Mammary epithelial cell (primary cell): ENCODE measurements at regions of chr2 and their contacts with region 1.

Region 1: GRCh38 chr2:172404824-172405223 is 22.6 kb upstream of the ITGA6 start:
- DNase-seq: peak; percentile 82
- H3K4me3 ChIP-seq: no peak overlapping the region
- H3K27ac ChIP-seq: peak overlapping the region; percentile 52
- H3K4me1 ChIP-seq: peaks cover 60% of the 10 kb centered on the region
- H3K27me3 ChIP-seq: no peaks in the 10 kb centered on the region
- CTCF ChIP-seq: no peak

Region 2: DNA sequence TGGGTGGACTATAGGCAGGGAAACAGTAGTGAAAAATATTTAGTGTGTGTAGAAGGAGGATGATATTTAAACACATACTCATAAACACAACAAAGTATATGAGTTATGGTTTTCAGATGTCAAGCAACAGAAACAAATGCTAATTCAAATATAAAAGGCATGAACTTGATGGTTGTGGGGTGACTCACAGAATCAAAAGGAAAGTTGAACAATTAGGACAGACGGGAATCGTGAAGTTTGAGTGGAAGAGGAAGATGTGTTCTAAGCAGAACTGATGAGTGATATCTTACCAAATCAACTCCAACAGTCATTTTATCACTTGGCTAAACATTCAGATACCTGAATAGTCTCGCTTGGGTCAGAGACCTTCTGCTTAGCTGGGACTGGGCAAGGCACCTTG is 31.1 kb before region 1 on chr2:
- CTCF ChIA-PET with region 1: no interaction called
- dilution Hi-C with region 1: no loop called
- in situ Hi-C with region 1: no loop called
- intact Hi-C with region 1: loop called (anchors 5 kb)
- DNase-seq: peak; percentile 73
- H3K4me3 ChIP-seq: no peak overlapping the region
- H3K27ac ChIP-seq: no peak overlapping the region
- H3K4me1 ChIP-seq: peaks cover 26% of the 10 kb centered on the region
- H3K27me3 ChIP-seq: no peaks in the 10 kb centered on the region
- CTCF ChIP-seq: no peak